Heart left ventricle (tissue), 16 donors: ENCODE measurements at regions of chr3 and their contacts with region 1.

Region 1: DNA sequence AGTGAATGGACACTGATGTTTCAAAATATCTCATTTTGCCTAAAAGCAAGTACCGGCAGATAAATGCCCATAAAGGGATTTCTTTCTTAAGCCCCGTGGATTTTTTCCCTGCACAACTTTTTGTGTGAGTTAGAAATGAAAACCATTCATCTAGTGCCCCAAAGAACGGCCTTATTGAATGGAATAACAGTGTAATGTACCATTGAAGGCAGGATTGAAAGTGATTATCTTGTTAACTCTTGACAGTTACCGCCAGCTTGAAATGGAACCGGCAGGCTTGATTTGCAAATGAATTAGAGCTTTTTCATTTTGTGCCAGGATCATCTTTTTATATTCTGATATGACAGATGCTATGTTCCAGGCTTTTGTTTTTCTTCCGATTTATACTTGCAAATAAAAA is 162.2 kb downstream of the RSRC1 start:
- DNase-seq: no peak
- ATAC-seq: no peak
- H3K4me3 ChIP-seq: no peak overlapping the region
- H3K27ac ChIP-seq: no peak overlapping the region
- H3K4me1 ChIP-seq: no peaks in the 10 kb centered on the region
- H3K27me3 ChIP-seq: no peaks in the 10 kb centered on the region
- CTCF ChIP-seq: no peak
- POLR2A ChIP-seq: no peak

Region 2: DNA sequence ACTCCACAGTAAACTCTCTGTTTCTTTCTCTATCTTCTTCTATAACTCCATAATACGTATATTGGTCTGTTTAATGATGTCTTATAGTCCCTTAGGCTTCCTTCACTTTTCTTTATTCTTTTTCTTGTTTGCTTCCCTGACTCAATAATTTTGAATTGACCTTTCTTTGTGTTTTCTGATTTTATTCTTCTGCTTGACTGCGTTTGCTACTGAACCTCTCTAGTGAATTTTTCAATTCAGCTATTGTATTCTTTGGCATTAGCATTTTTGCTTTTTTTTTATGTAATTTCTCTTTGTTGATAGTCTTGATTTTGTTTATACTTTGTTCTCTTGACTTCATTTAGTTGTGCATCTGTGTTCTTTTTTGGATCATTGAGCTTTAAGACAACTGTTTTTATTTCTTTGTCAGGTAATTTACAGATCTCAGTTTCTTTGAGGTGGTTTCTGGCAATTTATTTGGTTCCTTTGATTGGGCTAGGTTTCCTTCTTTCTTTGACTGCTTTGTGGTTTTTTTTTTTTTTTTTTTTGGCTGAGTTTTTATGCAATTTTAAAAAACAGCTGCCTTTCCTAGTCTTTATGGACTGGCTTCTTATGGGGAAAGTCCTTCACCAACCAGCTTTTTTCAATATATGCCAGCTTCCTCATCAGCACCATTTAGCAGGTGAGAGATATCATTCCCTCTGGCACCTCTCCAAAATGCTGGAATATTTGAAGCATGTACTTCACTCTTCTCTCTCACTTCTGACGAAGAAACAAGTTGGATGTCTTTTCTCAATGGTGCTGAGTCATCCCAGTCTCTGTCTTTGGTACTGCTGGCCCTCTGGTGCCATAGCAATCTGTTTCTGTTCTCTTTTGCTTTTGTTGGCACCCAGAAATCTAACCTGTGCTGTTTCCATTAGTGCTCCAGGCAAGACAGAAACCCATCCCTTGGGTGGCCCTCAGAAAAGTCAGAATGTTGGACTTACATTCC is 144.5 kb before region 1 on chr3:
- intact Hi-C with region 1: no loop called
- DNase-seq: no peak
- ATAC-seq: no peak
- H3K4me3 ChIP-seq: no peak overlapping the region
- H3K27ac ChIP-seq: no peak overlapping the region
- H3K4me1 ChIP-seq: no peaks in the 10 kb centered on the region
- H3K27me3 ChIP-seq: no peaks in the 10 kb centered on the region
- CTCF ChIP-seq: no peak
- POLR2A ChIP-seq: no peak

Region 3: DNA sequence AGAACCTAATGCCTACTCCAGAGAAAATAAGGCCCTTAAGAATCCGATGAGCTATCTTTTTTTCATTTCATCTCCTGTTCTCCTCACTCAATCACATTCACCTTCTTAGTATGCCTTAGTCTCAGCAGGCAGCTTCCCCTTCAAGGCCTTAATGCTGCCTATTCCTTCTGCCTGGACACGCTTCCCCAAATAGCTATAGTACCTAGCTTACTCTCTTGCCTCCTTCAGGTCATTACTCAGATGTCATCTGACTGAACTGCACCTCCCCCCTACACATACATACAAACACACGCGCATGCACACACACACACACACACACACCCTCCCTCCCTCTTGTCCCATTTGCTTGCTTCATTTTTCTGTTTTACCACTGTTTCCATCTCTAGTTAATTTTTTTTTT is 107.4 kb after region 1 on chr3:
- intact Hi-C with region 1: loop called in 1 of 10 experiments (anchors 5 kb)
- DNase-seq: no peak
- ATAC-seq: no peak
- H3K4me3 ChIP-seq: no peak overlapping the region
- H3K27ac ChIP-seq: no peak overlapping the region
- H3K4me1 ChIP-seq: no peaks in the 10 kb centered on the region
- H3K27me3 ChIP-seq: no peaks in the 10 kb centered on the region
- CTCF ChIP-seq: no peak
- POLR2A ChIP-seq: no peak